A673 (cell line): ENCODE measurements at regions of chr14 and their contacts with region 1.

Region 1: DNA sequence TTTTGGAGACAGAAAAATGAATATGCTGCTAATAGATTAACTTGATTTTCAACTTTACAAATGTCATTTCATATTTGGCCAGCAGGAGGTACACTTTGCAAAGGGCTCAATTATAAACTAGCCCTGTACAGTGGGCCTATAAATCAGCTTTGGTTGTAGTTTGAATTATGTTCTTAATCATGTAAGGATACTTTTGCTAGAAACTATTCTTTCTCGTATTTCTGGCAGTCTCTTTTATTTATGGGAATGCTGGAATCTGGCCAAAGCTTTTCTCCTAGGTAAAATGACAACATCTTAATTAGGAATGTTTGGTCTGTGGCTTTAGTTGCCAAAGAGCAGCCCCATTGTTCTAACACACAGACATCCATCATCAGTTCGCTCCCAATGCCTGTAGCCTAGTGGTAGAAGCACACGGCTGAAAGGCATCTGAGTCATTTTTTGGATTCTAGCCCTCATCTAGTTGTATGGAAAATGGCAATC is 1322.3 kb upstream of the SEL1L start:
- DNase-seq: peak; percentile 74
- H3K4me3 ChIP-seq: no peak overlapping the region
- H3K27ac ChIP-seq: no peak overlapping the region
- H3K4me1 ChIP-seq: peaks cover 27% of the 10 kb centered on the region
- H3K27me3 ChIP-seq: no peaks in the 10 kb centered on the region
- CTCF ChIP-seq: peak; percentile 74

Region 2: DNA sequence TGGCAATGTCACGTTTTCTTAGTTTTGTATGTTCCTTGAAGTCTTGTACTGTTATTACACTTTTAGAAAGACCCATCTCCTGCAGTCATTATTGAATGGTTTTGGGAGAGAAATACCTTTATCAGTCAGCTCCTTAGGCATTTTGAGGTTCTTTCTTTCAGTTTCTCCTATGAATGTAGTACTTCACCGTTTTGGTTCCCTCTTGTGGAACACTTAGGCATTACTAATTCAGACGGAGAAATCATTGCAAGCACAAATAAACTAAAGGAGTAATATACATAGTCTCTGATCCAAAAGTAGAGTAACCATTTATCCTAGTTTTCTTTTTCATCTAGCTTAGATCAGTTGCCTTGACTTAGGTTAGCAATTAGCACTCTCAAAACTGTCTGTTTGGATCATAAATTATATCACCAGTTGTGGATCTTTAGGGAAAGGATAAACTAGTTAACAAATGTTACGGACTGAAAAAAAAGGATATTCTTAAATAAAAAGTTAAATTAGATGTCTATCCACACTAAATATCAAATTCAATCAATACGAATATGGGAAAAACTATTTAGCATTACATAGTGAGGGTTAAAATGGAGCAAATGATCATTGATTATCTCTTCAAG is 216.0 kb after region 1 on chr14:
- CTCF ChIA-PET with region 1: interaction called, 4 read pairs
- POLR2A ChIA-PET with region 1: no interaction called
- intact Hi-C with region 1: loop called (anchors 2 kb)
- DNase-seq: peak; percentile 79
- H3K4me3 ChIP-seq: no peak overlapping the region
- H3K27ac ChIP-seq: no peak overlapping the region
- H3K4me1 ChIP-seq: no peaks in the 10 kb centered on the region
- H3K27me3 ChIP-seq: no peaks in the 10 kb centered on the region
- CTCF ChIP-seq: peak; percentile 69

Region 3: DNA sequence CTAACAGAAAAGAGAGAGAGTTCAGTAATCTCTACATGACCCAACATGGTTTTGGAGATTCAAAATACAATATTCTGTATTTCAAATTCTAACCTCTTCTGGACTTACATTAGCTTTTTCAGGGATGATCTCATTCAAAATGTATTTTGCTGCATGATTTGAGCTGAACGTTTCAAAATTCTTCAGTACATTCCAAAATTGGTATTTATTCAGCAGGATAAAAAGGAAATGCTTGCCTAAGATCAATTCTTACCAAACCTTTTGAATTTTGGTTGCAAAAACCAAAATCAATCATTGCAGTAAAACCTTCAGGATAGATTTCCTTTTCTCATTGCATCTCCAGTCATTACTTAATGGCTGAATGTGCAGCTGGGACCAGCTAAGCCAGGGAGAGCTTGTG is 439.0 kb after region 1 on chr14:
- CTCF ChIA-PET with region 1: no interaction called
- POLR2A ChIA-PET with region 1: no interaction called
- intact Hi-C with region 1: loop called (anchors 10 kb)
- DNase-seq: peak; percentile 82
- H3K4me3 ChIP-seq: no peak overlapping the region
- H3K27ac ChIP-seq: peak overlapping the region; percentile 83
- H3K4me1 ChIP-seq: peaks cover 46% of the 10 kb centered on the region
- H3K27me3 ChIP-seq: no peaks in the 10 kb centered on the region
- CTCF ChIP-seq: no peak